Head of caudate nucleus (tissue), 42 donors: ENCODE measurements at regions of chr2 and their contacts with region 1.

Region 1: DNA sequence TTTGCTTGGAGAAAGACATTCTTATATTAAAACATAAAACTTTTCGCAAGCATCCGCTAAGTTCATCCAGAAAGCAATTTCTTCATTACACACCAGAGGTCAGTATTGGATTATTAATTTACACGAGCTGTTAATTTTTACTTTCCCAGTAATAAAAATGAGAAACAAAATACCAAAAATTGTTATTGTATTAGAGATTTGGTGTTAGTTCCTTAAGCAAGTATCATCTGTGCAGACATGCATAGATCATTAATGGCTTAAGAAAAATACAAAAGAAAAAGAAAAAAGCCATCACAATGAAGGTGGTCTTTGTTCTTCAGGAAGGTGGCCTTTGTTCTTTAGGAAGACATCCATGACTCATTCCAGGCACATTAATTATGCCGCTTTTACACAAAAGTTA is 53.6 kb upstream of the HNMT start:
- DNase-seq: no peak

Region 2: GRCh38 chr2:138827426-138828054 is 916.9 kb after region 1 on chr2:
- intact Hi-C with region 1: loop called (anchors 5 kb)
- DNase-seq: peak in 21 of 42 donors; percentile 8 to 75 (median 29)